Heart left ventricle (tissue), 16 donors: ENCODE measurements at regions of chr17 and their contacts with region 1.

Region 1: DNA sequence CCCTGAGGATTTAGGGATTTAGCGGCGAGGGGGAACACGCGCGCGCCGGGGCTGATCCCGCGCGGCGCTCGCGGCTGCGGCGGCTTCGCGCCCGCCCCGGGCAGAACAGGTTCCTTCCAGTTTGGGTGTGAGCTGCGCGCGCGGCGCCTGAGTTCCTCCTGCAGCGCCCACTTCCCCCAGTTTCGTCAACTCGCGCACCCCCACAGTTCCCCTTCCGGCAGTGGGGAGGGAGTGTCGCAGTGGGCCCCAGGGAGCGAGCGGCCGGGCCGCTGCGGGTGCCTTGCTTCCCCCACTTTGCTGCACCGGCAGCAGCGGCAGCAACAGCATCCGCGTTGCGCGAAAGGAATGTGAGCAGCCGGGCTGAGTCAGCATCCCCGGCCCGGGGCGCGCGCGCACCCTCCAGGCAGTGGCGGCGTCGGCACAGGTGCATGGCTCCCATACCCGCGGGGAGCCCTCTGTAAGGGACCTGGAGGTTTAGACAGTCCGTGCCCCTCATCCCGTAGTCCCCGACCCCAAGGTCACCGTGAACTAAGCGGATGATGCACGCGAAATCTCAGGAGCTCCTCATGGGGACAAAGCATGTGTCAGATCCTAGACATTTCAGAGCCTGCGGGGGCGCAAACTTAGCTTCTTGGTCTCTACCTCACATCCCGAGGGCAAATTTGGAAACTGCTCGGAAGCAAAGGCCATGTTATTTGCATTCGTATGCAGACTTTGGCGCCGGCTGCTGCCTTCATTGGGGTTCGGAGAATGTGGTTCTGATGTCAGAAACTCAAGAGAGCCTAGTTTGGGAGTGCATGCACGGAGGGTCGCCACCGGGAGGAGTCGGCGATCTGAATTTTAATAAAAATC is 775 bp downstream of the ARSG start:
- DNase-seq: peak; percentile 75 to 92 (median 83)
- ATAC-seq: peak; percentile 32 to 88 (median 82)
- H3K4me3 ChIP-seq: peak overlapping the region; percentile 60 to 91 (median 70)
- H3K27ac ChIP-seq: peak overlapping the region in 10 of 12 donors; percentile 14 to 98 (median 58)
- H3K4me1 ChIP-seq: peaks cover 2 to 47% (median 13%) of the 10 kb centered on the region in 12 donors
- H3K27me3 ChIP-seq: peaks cover 0 to 30% (median 3%) of the 10 kb centered on the region in 9 donors
- CTCF ChIP-seq: peak in 2 of 12 donors; percentile 0 to 2
- POLR2A ChIP-seq: no peak

Region 2: DNA sequence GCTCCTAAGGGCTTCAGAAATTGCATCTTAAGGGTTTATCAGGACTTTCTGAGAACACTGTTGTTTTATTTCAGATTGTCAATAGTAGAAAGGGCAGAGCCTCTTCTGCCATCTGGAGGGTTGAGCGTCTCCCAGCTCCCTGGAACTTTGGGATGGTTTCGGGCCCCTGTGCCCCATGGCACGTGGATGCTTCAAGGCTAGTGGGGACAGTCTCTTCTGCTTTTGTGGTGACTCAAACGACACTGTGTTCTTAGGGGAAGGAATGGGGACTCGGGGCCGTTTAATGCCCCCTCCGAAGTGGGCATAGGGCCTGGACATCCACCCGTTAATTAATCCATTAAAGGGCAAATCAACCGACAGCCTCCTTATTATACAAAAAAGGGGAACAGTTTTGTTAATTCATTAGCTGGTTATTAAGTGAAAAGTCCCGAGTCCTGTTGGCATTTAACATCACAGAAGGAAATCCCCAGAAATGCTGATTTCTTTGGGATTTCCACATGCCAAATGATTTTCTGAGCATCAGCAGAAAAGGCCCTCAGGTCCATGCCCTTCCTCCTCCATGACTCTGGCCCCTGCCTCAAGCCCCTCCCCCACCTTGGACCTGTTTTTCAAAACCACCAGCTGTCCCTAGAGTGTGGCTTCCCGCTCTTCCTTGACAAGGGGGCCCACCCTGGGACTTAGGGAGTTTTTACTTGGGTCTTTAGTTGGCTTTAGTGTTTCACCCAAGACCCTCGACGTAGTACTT is 67.9 kb after region 1 on chr17:
- intact Hi-C with region 1: loop called in 1 of 10 experiments (anchors 5 kb)
- DNase-seq: no peak
- ATAC-seq: no peak
- H3K4me3 ChIP-seq: no peak overlapping the region
- H3K27ac ChIP-seq: no peak overlapping the region
- H3K4me1 ChIP-seq: peaks cover 0 to 19% (median 0%) of the 10 kb centered on the region in 12 donors
- H3K27me3 ChIP-seq: no peaks in the 10 kb centered on the region
- CTCF ChIP-seq: no peak
- POLR2A ChIP-seq: no peak

Region 3: GRCh38 chr17:68377862-68378770 is 86.0 kb after region 1 on chr17:
- intact Hi-C with region 1: loop called in 3 of 10 experiments (anchors 5 to 10 kb)
- DNase-seq: peak; percentile 89 to 99 (median 93)
- ATAC-seq: peak; percentile 92 to 94 (median 94)
- H3K4me3 ChIP-seq: peak overlapping the region in 8 of 12 donors; percentile 8 to 31 (median 18)
- H3K27ac ChIP-seq: peak overlapping the region; percentile 87 to 99 (median 96)
- H3K4me1 ChIP-seq: peaks cover 7 to 55% (median 35%) of the 10 kb centered on the region in 12 donors
- H3K27me3 ChIP-seq: no peaks in the 10 kb centered on the region
- CTCF ChIP-seq: no peak
- POLR2A ChIP-seq: no peak